A549 (cell line): ENCODE measurements at regions of chr19 and their contacts with region 1.

Region 1: GRCh38 chr19:45717166-45717982 is 13.3 kb downstream of the FBXO46 start:
- DNase-seq: peak; percentile 99 to 100
- ATAC-seq: peak; percentile 92 to 97
- H3K4me3 ChIP-seq: peak overlapping the region; percentile 80
- H3K27ac ChIP-seq: peak overlapping the region; percentile 92 to 96
- H3K4me1 ChIP-seq: peaks cover 39% of the 10 kb centered on the region
- CTCF ChIP-seq: no peak; the same call in 2 of the 3 replicates
- EP300 ChIP-seq: peak in 1 of 2 experiments; percentile 42; a peak in 1 of 5 replicates
- POLR2A ChIP-seq: peak; percentile 41
- RAD21 ChIP-seq: no peak

Region 2: DNA sequence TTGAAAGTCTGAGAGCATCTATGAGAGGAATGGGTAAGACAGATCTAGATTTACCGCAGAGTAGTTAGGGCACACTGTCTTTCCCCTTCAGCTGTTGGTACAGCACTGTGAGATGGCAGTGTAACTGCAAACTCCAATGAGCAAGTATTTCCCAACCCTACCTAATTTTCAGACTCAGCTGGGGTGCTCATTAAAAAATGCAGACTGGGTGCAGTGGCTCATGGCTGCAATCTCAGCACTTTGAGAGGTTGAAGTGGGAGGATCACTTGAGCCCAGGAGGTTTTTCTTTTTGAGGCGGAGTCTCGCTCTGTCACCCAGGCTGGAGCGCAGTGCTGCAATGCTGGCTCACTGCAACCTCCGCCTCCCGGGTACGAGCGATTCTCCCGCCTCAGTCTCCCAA is 12.3 kb before region 1 on chr19:
- CTCF ChIA-PET with region 1: interaction called, 30 read pairs
- POLR2A ChIA-PET with region 1: interaction called, 11 read pairs
- DNase-seq: no peak
- ATAC-seq: peak; percentile 19 to 35; a peak in 4 of 6 replicates
- H3K4me3 ChIP-seq: no peak overlapping the region
- H3K27ac ChIP-seq: no peak overlapping the region
- H3K4me1 ChIP-seq: no peaks in the 10 kb centered on the region
- CTCF ChIP-seq: no peak
- EP300 ChIP-seq: no peak
- POLR2A ChIP-seq: no peak
- RAD21 ChIP-seq: no peak

Region 3: GRCh38 chr19:45730389-45731288 is 13.3 kb after region 1 on chr19 and contains the start of gene FBXO46:
- CTCF ChIA-PET with region 1: interaction called, 7 read pairs
- POLR2A ChIA-PET with region 1: interaction called, 34 read pairs
- DNase-seq: peak; percentile 98 to 99
- ATAC-seq: peak; percentile 98 to 99
- H3K4me3 ChIP-seq: peak within 1 kb of the TSS; percentile 89
- H3K27ac ChIP-seq: peak within 1 kb of the TSS; percentile 92 to 95
- H3K4me1 ChIP-seq: peaks cover 24% of the 10 kb centered on the region
- CTCF ChIP-seq: no peak
- EP300 ChIP-seq: no peak
- POLR2A ChIP-seq: peak; percentile 75
- RAD21 ChIP-seq: peak; percentile 14 to 23; a peak in 2 of 5 replicates
- polyA plus RNA-seq, gene FBXO46: 4.9 and 6.9 TPM in 2 replicates

Region 4: DNA sequence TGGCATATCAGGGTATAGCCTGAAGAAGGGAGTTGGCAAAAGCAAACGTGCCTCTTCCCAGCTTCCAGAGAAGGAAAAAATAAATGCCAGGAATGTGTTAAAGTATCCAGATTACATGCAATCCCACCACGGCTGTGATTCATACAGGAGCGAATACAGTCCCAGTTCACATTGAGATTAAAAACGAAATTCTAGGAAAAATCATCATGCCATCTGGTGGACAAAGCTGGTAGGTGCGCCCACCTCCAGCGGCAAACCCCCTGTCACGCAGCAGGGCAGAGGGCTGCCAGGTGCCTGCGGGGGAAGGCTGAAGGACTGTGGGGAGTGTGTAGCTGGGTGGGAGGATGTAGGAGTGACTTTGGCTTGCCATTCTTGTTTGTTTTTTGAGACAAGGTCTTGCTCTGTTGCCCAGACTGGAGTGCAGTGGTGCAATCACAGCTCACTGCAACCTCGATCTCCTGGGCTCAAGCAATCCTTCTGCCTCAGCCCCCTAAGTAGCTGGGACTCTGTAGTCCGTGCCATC is 81.7 kb after region 1 on chr19:
- CTCF ChIA-PET with region 1: interaction called, 13 read pairs
- POLR2A ChIA-PET with region 1: no interaction called
- DNase-seq: peak; percentile 68 to 94
- ATAC-seq: peak; percentile 85 to 94
- H3K4me3 ChIP-seq: no peak overlapping the region
- H3K27ac ChIP-seq: peak overlapping the region in 1 of 2 experiments; percentile 66; a peak in 2 of 6 replicates
- H3K4me1 ChIP-seq: peaks cover 18% of the 10 kb centered on the region
- CTCF ChIP-seq: peak; percentile 92
- EP300 ChIP-seq: no peak
- POLR2A ChIP-seq: no peak
- RAD21 ChIP-seq: peak; percentile 79